Activated T-helper 1 cell treated with anti-CD3 and anti-CD28 coated beads, Interleukin-12 subunit alpha, Interleukin-12 subunit beta, Interleukin-2, Interleukin-4 antibody, amounts not matched to agents 30 ng/mL and 10 ng/mL and 1 ng/mL, durations not matched to agents 14 hours and 24 hours and 36 hours (primary cell): ENCODE measurements at regions of chr2 and their contacts with region 1.

Region 1: DNA sequence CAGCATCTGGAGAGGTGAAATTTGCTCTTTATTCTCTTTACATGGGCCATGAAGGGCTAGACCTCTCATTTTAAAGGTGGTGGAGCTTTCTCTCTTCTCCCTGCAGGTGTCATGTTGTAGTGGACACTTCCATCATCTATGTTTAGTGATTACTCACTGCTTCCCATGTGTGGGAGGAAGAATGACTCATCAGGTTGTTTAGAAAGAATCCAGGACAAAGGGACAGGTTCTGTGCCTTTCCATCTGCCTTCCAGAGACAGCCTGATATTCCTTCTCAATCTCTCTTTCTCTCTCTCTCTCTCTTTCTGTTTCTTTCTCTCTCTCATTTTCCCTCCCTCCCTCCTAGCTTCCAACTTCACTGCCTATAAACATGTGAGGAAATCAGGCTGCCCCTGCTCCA is 38.7 kb downstream of the SCG2 start:
- DNase-seq: no peak
- H3K4me3 Mint-ChIP-seq: no peak overlapping the region
- H3K27ac Mint-ChIP-seq: no peak overlapping the region
- H3K4me1 Mint-ChIP-seq: peaks cover 6% of the 10 kb centered on the region
- H3K27me3 Mint-ChIP-seq: peaks cover 1% of the 10 kb centered on the region

Region 2: DNA sequence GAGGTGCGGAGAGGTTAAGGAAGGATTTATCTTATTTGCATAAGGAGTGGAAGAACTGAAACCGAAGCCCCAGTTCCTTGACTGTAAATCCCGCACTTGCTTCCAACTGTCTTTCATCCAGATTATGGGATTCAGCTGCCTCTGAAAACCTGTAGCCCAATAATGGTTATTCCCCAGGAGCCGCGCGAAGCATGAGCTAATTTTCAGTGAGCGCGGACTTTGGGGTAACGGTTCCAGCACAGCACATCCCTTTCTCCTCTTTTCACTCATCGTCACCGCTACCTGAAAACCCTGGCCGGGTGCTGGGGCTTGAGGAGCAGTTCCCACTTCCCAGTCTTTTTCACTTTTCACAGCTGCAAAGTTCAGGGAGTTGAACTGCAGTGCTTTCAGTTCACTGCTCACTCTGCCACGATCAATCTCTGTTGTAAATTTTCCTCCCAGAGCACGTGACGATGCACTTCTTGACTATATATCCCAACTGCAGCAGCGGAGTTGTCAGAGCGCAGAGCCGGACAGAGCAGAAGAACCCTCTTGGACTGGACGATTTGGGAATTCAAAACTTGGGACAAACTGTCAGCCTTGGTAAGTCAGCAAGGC is 511.7 kb before region 1 on chr2 and contains the start of gene KCNE4:
- intact Hi-C with region 1: no loop called
- DNase-seq: no peak
- H3K4me3 Mint-ChIP-seq: no peak within 1 kb of the TSS
- H3K27ac Mint-ChIP-seq: no peak within 1 kb of the TSS
- H3K4me1 Mint-ChIP-seq: no peaks in the 10 kb centered on the region
- H3K27me3 Mint-ChIP-seq: no peaks in the 10 kb centered on the region
- total RNA-seq, gene KCNE4: not detected in 2 replicates

Region 3: GRCh38 chr2:223854741-223855140 is 291.3 kb after region 1 on chr2:
- intact Hi-C with region 1: no loop called
- DNase-seq: no peak
- H3K4me3 Mint-ChIP-seq: no peak overlapping the region
- H3K27ac Mint-ChIP-seq: no peak overlapping the region
- H3K4me1 Mint-ChIP-seq: peaks cover 14% of the 10 kb centered on the region
- H3K27me3 Mint-ChIP-seq: no peaks in the 10 kb centered on the region

Region 4: GRCh38 chr2:224659714-224660113 is 1096.3 kb after region 1 on chr2:
- intact Hi-C with region 1: loop called (anchors 5 kb)
- DNase-seq: no peak
- H3K4me3 Mint-ChIP-seq: no peak overlapping the region
- H3K27ac Mint-ChIP-seq: no peak overlapping the region
- H3K4me1 Mint-ChIP-seq: no peaks in the 10 kb centered on the region
- H3K27me3 Mint-ChIP-seq: no peaks in the 10 kb centered on the region